ENCODE measurements at regions of chr22 and their contacts with region 1.

Region 1: DNA sequence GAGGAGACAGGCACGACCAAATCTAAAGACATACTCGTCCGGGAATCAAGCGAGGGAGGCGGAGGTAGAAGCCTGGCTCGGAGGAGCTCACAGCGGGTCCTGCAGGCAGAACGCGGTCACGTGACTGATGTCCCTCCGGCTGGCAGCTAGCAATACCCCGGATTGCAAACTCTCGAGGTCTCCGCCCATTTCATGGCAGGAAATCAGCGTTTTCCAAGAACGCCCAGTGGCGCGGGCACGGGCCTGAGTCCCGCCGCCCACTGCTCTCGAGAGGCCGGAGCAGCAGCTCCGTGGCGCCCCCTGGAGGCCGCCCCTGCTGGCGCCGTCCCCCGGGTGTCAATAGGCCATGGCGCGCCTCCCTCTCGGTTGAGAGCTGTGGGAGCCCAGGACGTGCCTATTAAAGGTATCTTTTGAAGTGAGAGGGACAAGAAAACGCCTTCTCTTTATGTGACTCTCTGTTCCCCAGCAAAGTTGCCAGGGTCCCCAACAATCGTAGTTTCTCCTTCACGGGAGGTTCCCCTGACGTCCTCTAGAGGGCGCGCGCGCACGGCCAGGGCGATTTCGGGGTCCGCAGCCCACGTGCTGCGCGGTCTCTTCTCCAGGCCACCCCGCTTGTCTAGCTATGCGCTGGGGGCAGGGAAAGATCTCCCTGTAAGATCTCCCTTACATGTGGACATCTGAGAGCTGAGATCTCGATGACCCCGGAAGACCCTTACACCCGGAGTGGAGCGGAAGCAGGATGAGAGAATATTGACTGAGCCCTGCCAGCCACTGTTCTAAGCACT is 37.3 kb upstream of the RBFOX2 start:
- DNase-seq: peak; percentile 80 to 89 (median 86)
- H3K4me3 ChIP-seq: peak overlapping the region; percentile 44 to 89 (median 62)
- H3K27ac ChIP-seq: peak overlapping the region; percentile 7 to 94 (median 83)
- H3K27me3 ChIP-seq: no peaks in the 10 kb centered on the region
- CTCF ChIP-seq: peak; percentile 94 to 100 (median 99)

Region 2: GRCh38 chr22:35313311-35314121 is 752.5 kb before region 1 on chr22:
- intact Hi-C with region 1: no loop called
- DNase-seq: peak in 2 of 10 donors; percentile 36 to 43
- H3K4me3 ChIP-seq: no peak overlapping the region
- H3K27ac ChIP-seq: peak overlapping the region in 3 of 59 donors; percentile 18 to 57 (median 18)
- H3K27me3 ChIP-seq: no peaks in the 10 kb centered on the region
- CTCF ChIP-seq: no peak

Region 3: GRCh38 chr22:36028646-36029405 is 37.1 kb before region 1 on chr22 and contains the start of gene RBFOX2:
- intact Hi-C with region 1: loop called (anchors 1 to 2 kb)
- DNase-seq: peak; percentile 92 to 96 (median 94)
- H3K4me3 ChIP-seq: peak within 1 kb of the TSS; percentile 58 to 93 (median 80)
- H3K27ac ChIP-seq: peak within 1 kb of the TSS; percentile 3 to 93 (median 84)
- H3K27me3 ChIP-seq: no peaks in the 10 kb centered on the region
- CTCF ChIP-seq: peak in 20 of 56 donors; percentile 3 to 53 (median 24)
- total RNA-seq, gene RBFOX2: 65.0 to 238 (median 170) TPM

Measured in dorsolateral prefrontal cortex (tissue), 120 donors.